Activated CD8-positive, alpha-beta T cell treated with anti-CD3 and anti-CD28 coated beads for 36 hours (primary cell): ENCODE measurements at regions of chr6 and their contacts with region 1.

Region 1: DNA sequence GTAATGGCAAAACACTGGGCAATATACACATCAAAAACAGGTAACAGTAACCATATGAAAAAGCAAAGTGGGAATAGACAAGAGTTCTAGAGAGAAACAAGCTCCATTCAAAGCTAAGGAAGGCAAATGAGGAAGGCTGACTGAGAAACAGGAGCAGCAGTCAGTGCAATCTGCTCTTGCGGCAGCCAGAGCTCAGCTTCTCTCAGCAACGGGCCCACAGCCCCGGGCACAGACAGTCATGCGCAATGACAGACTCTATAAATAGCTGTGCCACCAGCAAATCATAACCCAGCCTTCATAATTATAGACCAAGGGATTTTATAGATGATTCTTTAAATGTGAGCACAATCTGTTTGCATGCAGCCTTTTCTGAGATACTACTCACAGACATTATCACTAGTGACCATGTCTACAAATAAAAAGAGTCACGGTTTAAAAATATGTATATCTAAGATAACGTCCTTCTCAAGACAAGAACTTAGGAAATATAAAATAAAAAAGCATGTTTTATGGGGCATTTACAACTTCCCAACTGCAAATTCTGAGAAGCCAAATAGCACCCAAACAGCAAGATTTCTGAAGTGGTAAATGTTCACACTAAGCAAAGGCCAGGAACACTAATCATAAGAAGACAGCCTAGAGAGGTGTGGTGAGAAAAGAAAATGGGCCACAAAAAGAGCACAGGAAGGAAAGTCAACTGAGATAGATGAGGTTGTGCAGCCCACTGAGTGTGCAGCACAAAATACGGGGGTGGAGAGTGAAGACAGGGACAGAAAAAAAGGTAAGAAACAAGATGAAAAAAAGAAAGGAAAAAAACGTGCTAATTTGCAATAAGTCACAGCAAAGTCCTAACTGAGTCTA is 39.9 kb upstream of the BEND6 start:
- DNase-seq: no peak
- ATAC-seq: no peak
- H3K4me3 Mint-ChIP-seq: no peak overlapping the region
- H3K27ac Mint-ChIP-seq: no peak overlapping the region
- H3K4me1 Mint-ChIP-seq: no peaks in the 10 kb centered on the region
- H3K27me3 Mint-ChIP-seq: peaks cover 3% of the 10 kb centered on the region
- CTCF ChIP-seq: no peak

Region 2: DNA sequence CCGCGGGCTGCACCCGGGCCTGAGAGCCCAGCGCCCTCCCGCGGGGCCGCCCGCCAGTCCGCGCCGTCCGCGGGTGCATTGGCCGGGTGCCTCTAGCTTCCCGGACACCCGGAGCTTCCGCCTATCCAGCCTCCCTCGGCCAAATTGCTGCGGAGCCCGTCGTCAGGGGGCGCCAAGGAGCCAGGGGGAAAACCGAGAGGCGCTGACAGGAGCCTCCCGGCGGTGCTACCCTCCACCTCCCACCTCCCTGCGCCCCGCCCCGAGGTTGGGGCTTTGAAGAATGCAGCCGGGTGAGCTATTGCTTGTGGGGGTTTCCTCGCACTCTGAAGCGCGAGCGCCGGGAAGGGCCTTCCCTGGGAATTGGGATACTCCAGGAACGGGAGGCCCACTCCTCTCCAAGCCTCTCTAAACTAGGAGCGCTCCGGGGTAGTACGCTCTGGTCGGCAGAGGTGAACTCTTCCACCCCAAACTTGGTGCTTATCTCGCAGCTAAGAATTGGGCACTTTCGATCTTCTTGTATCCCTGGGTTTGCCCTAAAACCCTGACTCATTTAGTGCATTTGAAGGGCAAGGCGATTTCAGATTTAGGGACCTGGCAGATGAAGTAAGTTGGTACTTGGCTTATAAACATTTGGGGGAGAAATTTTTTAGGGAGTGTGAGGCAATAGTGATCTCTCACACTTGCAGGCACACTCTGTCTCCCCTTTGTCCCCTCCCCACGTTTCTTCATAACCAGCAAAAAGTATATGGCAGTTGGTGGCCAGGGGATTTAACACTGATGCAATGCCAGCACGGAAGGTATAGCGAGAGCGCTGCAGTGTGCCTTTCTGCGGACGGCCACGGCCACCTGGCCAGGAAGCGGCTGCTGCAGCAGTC is 40.4 kb after region 1 on chr6:
- CTCF ChIA-PET with region 1: interaction called, 3 read pairs
- POLR2A ChIA-PET with region 1: no interaction called
- intact Hi-C with region 1: loop called (anchors 5 kb)
- DNase-seq: peak; percentile 81
- ATAC-seq: peak; percentile 77
- H3K4me3 Mint-ChIP-seq: peak overlapping the region; percentile 73
- H3K27ac Mint-ChIP-seq: no peak overlapping the region
- H3K4me1 Mint-ChIP-seq: peaks cover 16% of the 10 kb centered on the region
- H3K27me3 Mint-ChIP-seq: peaks cover 54% of the 10 kb centered on the region
- CTCF ChIP-seq: peak; percentile 64

Region 3: DNA sequence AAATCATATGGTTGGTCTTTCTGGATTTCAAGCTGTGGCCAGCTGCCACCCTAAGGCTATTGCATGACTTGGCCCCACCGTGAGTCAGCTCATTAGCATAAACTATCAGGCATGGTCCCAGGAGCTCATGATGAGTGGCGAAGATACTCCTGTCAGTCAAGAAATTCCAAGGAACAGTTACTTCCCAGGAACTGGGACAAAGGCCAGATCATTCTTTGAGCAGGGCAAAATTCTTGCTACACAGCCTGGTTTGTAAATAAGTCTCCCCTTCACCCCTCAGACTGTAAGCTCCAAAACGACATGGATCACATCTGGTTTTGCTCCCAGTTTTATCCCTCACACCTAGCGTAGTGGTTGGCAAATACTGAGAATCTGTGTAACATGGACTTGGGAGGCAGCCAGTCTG is 98.5 kb after region 1 on chr6:
- CTCF ChIA-PET with region 1: no interaction called
- POLR2A ChIA-PET with region 1: no interaction called
- intact Hi-C with region 1: no loop called
- DNase-seq: no peak
- ATAC-seq: no peak
- H3K4me3 Mint-ChIP-seq: no peak overlapping the region
- H3K27ac Mint-ChIP-seq: no peak overlapping the region
- H3K4me1 Mint-ChIP-seq: no peaks in the 10 kb centered on the region
- H3K27me3 Mint-ChIP-seq: peaks cover 13% of the 10 kb centered on the region
- CTCF ChIP-seq: no peak